ENCODE measurements at regions of chr22 and their contacts with region 1.

Region 1: DNA sequence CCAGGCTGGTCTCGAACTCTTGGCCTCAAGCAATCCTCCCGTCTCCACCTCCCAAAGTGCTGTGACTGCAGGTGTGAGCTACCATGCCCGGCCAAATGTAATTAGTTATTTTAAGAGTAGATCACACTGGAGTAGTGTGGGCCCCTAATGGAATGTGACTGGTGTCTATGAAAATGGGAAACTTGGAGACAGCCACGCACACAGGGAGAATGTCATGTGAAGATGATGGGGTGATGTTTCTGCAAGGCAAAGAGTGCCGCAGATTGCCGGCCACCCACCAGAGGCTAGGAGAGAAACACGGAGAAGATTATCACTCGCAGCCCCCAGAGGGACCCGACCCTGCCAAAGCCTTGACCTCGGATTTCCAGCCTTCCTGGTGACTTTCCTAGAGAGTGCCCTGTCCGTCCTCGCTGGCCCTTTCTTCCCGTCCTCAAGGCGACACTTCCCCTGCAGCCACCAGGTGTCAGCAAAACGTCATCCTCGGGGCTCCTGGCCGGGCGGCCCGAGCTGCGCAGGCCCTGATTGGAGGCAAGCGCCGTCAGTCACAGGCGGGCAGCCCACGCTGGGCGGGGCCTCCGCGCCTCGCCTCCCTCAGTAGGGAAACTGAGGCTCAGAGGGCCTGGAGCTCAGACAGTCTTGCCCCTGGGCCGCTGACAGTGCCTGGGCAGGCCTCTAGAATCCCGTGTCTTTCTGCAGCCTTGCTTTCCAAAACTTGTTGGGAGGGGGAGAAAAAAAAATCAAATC is 16.3 kb downstream of the CRYBB2 start:
- DNase-seq: peak; percentile 84
- ATAC-seq: peak; percentile 100
- H3K4me3 ChIP-seq: 0 out of 4 replicates have a peak overlapping the region, but pooled peaks of 1 of the 2 experiments have one; percentile 14
- H3K27ac ChIP-seq: no peak overlapping the region
- H3K4me1 ChIP-seq: peaks cover 0 to 4% of the 10 kb centered on the region in 2 experiments; a peak in 1 of 4 replicates
- H3K27me3 ChIP-seq: 0 out of 2 replicates have a peak, but pooled peaks cover 3% of the 10 kb centered on the region
- CTCF ChIP-seq: peak; percentile 80 to 83 (median 81)
- POLR2A ChIP-seq: no peak
- RAD21 ChIP-seq: peak; percentile 91

Region 2: DNA sequence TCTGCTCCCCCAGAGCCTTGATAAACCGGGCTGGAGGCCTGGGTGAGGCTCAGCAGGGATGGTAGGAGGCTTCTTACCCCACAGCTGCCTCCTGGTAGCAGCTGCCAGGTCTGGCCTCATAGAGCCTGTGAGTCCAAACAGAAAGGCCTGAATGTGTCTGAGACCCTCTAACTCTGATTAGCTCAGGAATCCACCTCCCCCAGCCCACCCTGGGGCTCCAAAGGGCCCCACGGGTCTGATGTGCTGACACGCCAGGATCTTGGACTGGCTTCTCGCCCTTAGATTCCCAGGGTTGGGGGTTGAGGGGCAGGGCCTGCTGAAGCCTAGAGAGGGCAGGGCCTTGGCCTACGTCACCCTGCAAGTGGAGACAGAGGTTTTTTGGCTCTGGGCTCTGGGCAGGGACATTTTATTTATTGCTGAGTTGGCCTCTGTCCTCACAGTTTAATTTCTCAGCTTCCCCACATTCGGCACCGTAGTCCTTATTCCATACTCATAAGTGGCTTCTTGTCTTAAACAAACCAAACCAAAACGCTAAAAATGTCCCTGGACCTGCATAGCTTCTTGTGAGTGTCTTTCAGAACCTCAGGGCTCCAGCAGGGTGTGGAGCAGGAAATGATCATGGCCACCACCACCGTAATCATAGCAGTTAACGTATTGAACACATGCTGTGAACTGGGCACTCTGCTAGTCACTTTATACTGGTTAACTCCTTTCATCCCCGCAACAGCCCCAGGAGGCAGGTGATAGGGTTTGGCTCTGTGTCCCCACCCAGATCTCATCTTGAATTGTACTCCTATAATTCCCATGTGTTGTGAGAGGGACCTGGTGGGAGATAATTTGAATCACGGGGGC is 258.1 kb before region 1 on chr22:
- CTCF ChIA-PET with region 1: no interaction called
- POLR2A ChIA-PET with region 1: no interaction called
- RAD21 ChIA-PET with region 1: no interaction called
- intact Hi-C with region 1: no loop called
- DNase-seq: no peak
- ATAC-seq: peak; percentile 78
- H3K4me3 ChIP-seq: no peak overlapping the region
- H3K27ac ChIP-seq: peak overlapping the region; percentile 70
- H3K4me1 ChIP-seq: peaks cover 40 to 68% of the 10 kb centered on the region in 2 experiments
- H3K27me3 ChIP-seq: no peaks in the 10 kb centered on the region
- CTCF ChIP-seq: no peak
- POLR2A ChIP-seq: no peak
- RAD21 ChIP-seq: no peak

Region 3: GRCh38 chr22:25334162-25334490 is 98.4 kb after region 1 on chr22:
- CTCF ChIA-PET with region 1: interaction called, 22 read pairs
- POLR2A ChIA-PET with region 1: no interaction called
- RAD21 ChIA-PET with region 1: interaction called in 1 of 2 experiments, 3 read pairs
- intact Hi-C with region 1: loop called (anchors 1 kb)
- DNase-seq: peak; percentile 36
- ATAC-seq: peak; percentile 96
- H3K4me3 ChIP-seq: no peak overlapping the region
- H3K27ac ChIP-seq: no peak overlapping the region
- H3K4me1 ChIP-seq: no peaks in the 10 kb centered on the region
- H3K27me3 ChIP-seq: no peaks in the 10 kb centered on the region
- CTCF ChIP-seq: peak; percentile 49 to 87 (median 80); a peak in 5 of 6 replicates
- POLR2A ChIP-seq: no peak
- RAD21 ChIP-seq: peak; percentile 63

Region 4: DNA sequence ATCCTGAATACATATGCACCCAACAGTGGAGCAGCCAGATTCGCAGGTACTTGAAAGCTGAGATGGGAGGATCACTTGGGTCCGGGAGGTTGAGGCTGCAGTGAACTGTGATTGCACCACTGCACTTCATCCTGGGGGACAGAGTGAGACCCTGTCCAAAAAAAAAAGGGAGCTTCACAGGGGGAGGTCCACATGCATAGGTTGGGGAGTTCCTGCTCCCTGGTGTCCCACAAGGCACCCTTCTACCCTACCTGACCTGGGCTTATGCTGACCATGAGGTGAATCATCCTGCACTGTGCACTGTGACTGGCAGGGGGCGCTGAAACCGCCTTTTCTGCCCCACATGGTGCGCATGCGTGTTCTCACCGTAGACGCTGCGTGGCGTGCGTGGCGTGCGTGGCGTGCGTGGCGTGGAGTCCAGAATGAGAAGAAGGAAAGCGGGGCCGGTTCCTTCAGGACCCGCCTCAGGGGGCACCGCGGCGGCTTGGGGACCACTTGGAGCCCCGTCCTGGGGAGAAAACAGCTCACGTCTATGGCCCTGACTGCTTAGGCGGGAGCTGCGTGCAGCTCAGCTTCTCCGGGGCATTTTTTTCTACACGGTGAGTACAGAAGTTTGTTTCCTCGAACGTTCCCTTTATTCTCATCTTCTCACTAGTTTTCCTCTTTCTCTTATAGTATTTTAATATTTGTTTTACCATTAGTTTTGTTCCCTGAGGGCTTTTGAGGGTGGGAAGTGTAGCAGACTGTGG is 212.1 kb after region 1 on chr22:
- CTCF ChIA-PET with region 1: no interaction called
- POLR2A ChIA-PET with region 1: no interaction called
- RAD21 ChIA-PET with region 1: no interaction called
- intact Hi-C with region 1: loop called (anchors 5 kb)
- DNase-seq: peak; percentile 71
- ATAC-seq: peak; percentile 96
- H3K4me3 ChIP-seq: peak overlapping the region; percentile 82 to 94
- H3K27ac ChIP-seq: peak overlapping the region; percentile 65
- H3K4me1 ChIP-seq: peaks cover 8 to 12% of the 10 kb centered on the region in 2 experiments; a peak in 3 of 4 replicates
- H3K27me3 ChIP-seq: no peaks in the 10 kb centered on the region
- CTCF ChIP-seq: peak; percentile 52 to 94 (median 85); a peak in 5 of 6 replicates
- POLR2A ChIP-seq: peak; percentile 78
- RAD21 ChIP-seq: peak; percentile 35; the same call in 1 of the 2 replicates

Region 5: GRCh38 chr22:25702040-25702439 is 466.3 kb after region 1 on chr22:
- CTCF ChIA-PET with region 1: no interaction called
- POLR2A ChIA-PET with region 1: no interaction called
- RAD21 ChIA-PET with region 1: no interaction called
- intact Hi-C with region 1: loop called (anchors 5 kb)
- DNase-seq: no peak
- ATAC-seq: no peak
- H3K4me3 ChIP-seq: no peak overlapping the region
- H3K27ac ChIP-seq: no peak overlapping the region
- H3K4me1 ChIP-seq: no peaks in the 10 kb centered on the region
- H3K27me3 ChIP-seq: no peaks in the 10 kb centered on the region
- CTCF ChIP-seq: peak; percentile 11 to 55 (median 40); a peak in 4 of 6 replicates
- POLR2A ChIP-seq: no peak
- RAD21 ChIP-seq: peak; percentile 59

Region 6: DNA sequence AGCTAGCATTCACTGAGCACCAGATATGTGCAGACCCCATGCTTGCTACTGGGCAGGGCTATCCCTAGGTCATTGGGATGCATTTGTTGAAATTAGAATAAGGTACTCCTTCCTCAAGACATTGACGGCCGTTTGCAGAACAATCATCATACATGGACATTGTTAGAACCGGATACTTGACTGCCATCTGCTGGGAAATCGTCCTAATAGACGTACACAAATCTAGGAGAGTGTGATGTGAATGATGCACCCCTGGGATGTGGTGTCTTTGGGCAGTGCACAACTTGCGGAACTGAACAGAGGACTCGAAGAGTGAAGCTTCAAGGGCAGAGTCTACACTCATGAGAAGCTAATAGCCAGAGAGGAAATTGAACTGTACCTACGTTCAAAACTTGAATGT is 542.2 kb after region 1 on chr22:
- CTCF ChIA-PET with region 1: interaction called, 4 read pairs
- POLR2A ChIA-PET with region 1: no interaction called
- RAD21 ChIA-PET with region 1: no interaction called
- intact Hi-C with region 1: loop called (anchors 5 kb)
- DNase-seq: peak; percentile 44
- ATAC-seq: peak; percentile 88
- H3K4me3 ChIP-seq: no peak overlapping the region
- H3K27ac ChIP-seq: no peak overlapping the region
- H3K4me1 ChIP-seq: no peaks in the 10 kb centered on the region
- H3K27me3 ChIP-seq: no peaks in the 10 kb centered on the region
- CTCF ChIP-seq: peak; percentile 32 to 62 (median 53); a peak in 5 of 6 replicates
- POLR2A ChIP-seq: no peak
- RAD21 ChIP-seq: peak; percentile 47; the same call in 1 of the 2 replicates